Activated T-helper 2 cell treated with anti-CD3 and anti-CD28 coated beads, Interferon-gamma antibody, Interleukin-2, Interleukin-4, amounts not matched to agents 10 μg/mL and 5 μg/mL and 100 μg/mL, durations not matched to agents 14 hours and 24 hours and 36 hours (primary cell): ENCODE measurements at regions of chr6 and their contacts with region 1.

Region 1: DNA sequence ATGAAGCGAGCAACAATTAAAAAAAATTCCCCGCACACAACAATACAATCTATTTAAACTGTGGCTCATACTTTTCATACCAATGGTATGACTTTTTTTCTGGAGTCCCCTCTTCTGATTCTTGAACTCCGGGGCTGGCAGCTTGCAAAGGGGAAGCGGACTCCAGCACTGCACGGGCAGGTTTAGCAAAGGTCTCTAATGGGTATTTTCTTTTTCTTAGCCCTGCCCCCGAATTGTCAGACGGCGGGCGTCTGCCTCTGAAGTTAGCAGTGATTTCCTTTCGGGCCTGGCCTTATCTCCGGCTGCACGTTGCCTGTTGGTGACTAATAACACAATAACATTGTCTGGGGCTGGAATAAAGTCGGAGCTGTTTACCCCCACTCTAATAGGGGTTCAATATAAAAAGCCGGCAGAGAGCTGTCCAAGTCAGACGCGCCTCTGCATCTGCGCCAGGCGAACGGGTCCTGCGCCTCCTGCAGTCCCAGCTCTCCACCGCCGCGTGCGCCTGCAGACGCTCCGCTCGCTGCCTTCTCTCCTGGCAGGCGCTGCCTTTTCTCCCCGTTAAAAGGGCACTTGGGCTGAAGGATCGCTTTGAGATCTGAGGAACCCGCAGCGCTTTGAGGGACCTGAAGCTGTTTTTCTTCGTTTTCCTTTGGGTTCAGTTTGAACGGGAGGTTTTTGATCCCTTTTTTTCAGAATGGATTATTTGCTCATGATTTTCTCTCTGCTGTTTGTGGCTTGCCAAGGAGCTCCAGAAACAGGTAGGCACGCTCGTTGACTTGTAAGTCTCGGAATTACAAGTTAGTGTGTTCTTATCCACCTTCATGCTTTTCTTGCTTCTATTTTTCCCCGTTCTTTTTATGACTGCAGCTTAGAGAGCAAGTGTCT is at the start of gene EDN1:
- DNase-seq: peak; percentile 33
- H3K4me3 Mint-ChIP-seq: peak within 1 kb of the TSS; percentile 79
- H3K27ac Mint-ChIP-seq: no peak within 1 kb of the TSS
- H3K4me1 Mint-ChIP-seq: peaks cover 21% of the 10 kb centered on the region
- H3K27me3 Mint-ChIP-seq: peaks cover 55% of the 10 kb centered on the region
- total RNA-seq, gene EDN1: 0.09 TPM in 2 replicates

Region 2: GRCh38 chr6:11585426-11586016 is 704.7 kb before region 1 on chr6:
- intact Hi-C with region 1: loop called (anchors 2 kb)
- DNase-seq: no peak
- H3K4me3 Mint-ChIP-seq: no peak overlapping the region
- H3K27ac Mint-ChIP-seq: no peak overlapping the region
- H3K4me1 Mint-ChIP-seq: no peaks in the 10 kb centered on the region
- H3K27me3 Mint-ChIP-seq: peaks cover 8% of the 10 kb centered on the region

Region 3: GRCh38 chr6:11653028-11653583 is 637.1 kb before region 1 on chr6:
- intact Hi-C with region 1: loop called (anchors 1 kb)
- DNase-seq: peak; percentile 31
- H3K4me3 Mint-ChIP-seq: no peak overlapping the region
- H3K27ac Mint-ChIP-seq: no peak overlapping the region
- H3K4me1 Mint-ChIP-seq: peaks cover 11% of the 10 kb centered on the region
- H3K27me3 Mint-ChIP-seq: peaks cover 16% of the 10 kb centered on the region

Region 4: DNA sequence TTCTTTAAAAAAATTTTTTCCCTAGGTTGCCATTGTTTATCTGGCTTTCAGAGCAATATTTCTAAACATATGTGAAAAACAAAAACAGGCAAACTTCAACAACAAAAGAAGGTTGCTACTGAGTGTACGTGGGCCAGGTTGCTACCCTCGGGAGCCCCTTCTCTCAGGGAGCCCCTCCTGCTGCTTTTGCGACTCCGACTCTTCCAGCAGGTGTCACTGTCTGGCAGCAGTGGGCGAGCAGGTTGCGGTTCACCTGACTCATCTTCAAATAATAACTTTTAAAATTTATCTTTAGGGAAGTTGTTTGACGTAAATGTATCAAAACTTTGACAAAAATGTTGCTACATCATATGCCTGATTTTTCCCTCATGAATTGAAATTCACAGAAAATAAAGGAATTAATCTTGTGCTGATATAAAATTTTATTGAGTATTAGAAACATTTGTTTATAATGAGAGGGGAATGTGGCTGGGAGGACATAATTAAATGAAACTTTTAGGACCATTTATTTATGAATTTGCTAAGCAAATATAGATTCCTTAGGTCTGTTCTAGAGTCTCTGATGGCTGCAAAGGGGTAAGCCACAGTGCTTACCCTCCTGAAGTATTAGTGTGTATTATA is 139.3 kb before region 1 on chr6:
- intact Hi-C with region 1: loop called (anchors 1 kb)
- DNase-seq: no peak
- H3K4me3 Mint-ChIP-seq: no peak overlapping the region
- H3K27ac Mint-ChIP-seq: no peak overlapping the region
- H3K4me1 Mint-ChIP-seq: peaks cover 25% of the 10 kb centered on the region
- H3K27me3 Mint-ChIP-seq: no peaks in the 10 kb centered on the region

Region 5: GRCh38 chr6:12241493-12242175 is 48.5 kb before region 1 on chr6:
- intact Hi-C with region 1: loop called (anchors 5 kb)
- DNase-seq: no peak
- H3K4me3 Mint-ChIP-seq: no peak overlapping the region
- H3K27ac Mint-ChIP-seq: no peak overlapping the region
- H3K4me1 Mint-ChIP-seq: peaks cover 27% of the 10 kb centered on the region
- H3K27me3 Mint-ChIP-seq: peaks cover 3% of the 10 kb centered on the region

Region 6: DNA sequence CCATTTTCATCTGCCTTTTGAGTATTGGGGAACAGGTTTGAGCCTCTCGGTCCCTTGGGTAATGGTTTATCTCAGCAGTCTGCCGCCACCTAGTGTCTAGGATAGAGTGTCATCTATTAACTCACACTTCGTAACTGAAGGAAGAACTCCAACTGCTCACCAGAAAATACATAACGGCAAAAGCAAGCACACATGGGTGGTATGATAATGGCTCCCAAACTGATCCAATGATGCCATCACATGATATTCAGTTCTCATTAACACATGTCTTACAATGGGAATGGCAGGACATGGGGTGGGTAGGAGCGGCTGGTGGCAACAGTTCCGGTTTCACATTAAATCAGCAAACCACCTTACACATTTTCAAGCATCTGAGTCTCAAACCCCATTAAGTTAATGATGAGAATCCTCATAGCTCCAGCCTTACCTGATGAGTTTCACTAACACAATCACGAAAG is 315.7 kb after region 1 on chr6:
- intact Hi-C with region 1: loop called (anchors 5 kb)
- DNase-seq: peak; percentile 22
- H3K4me3 Mint-ChIP-seq: peak overlapping the region; percentile 38
- H3K27ac Mint-ChIP-seq: no peak overlapping the region
- H3K4me1 Mint-ChIP-seq: peaks cover 9% of the 10 kb centered on the region
- H3K27me3 Mint-ChIP-seq: peaks cover 10% of the 10 kb centered on the region